OCI-LY7 (cell line): ENCODE measurements at regions of chr3 and their contacts with region 1.

Region 1: GRCh38 chr3:158109804-158110657 is at the start of gene RSRC1:
- DNase-seq: peak; percentile 91
- H3K4me3 ChIP-seq: peak within 1 kb of the TSS; percentile 90
- H3K27ac ChIP-seq: peak within 1 kb of the TSS; percentile 80
- H3K4me1 ChIP-seq: peaks cover 37% of the 10 kb centered on the region
- CTCF ChIP-seq: no peak
- total RNA-seq, gene RSRC1: 78.1 and 97.4 TPM in 2 replicates

Region 2: GRCh38 chr3:158097593-158098308 is 12.3 kb before region 1 on chr3:
- CTCF ChIA-PET with region 1: no interaction called
- POLR2A ChIA-PET with region 1: interaction called, 19 read pairs
- intact Hi-C with region 1: no loop called
- DNase-seq: peak; percentile 84
- H3K4me3 ChIP-seq: peak overlapping the region; percentile 72
- H3K27ac ChIP-seq: peak overlapping the region; percentile 2
- H3K4me1 ChIP-seq: peaks cover 12% of the 10 kb centered on the region
- CTCF ChIP-seq: no peak

Region 3: GRCh38 chr3:158121295-158121694 is 11.3 kb after region 1 on chr3:
- CTCF ChIA-PET with region 1: no interaction called
- POLR2A ChIA-PET with region 1: interaction called, 56 read pairs
- intact Hi-C with region 1: no loop called
- DNase-seq: no peak
- H3K4me3 ChIP-seq: no peak overlapping the region
- H3K27ac ChIP-seq: no peak overlapping the region
- H3K4me1 ChIP-seq: no peaks in the 10 kb centered on the region
- CTCF ChIP-seq: no peak

Region 4: DNA sequence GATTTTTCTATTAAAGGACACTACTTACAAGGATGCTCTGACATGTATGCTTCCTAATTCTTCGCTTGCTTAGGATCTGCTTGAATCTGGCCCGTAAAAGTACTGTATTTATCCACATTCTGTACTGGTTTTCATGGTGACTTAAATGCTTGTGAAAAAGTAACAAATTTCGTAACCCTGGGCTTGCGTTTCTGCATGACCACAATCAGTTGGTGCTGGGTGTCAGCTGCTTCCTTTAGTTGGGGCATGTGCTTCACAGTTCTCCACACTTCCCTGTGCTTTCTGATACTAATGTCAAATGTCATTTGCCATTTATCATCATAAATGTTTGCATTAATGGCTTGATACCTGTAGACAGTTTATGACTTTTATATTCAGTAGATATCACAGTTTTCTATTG is 242.5 kb after region 1 on chr3:
- CTCF ChIA-PET with region 1: no interaction called
- POLR2A ChIA-PET with region 1: interaction called, 8 read pairs
- intact Hi-C with region 1: loop called (anchors 2 kb)
- DNase-seq: peak; percentile 59
- H3K4me3 ChIP-seq: no peak overlapping the region
- H3K27ac ChIP-seq: peak overlapping the region; percentile 49
- H3K4me1 ChIP-seq: peaks cover 70% of the 10 kb centered on the region
- CTCF ChIP-seq: no peak

Region 5: DNA sequence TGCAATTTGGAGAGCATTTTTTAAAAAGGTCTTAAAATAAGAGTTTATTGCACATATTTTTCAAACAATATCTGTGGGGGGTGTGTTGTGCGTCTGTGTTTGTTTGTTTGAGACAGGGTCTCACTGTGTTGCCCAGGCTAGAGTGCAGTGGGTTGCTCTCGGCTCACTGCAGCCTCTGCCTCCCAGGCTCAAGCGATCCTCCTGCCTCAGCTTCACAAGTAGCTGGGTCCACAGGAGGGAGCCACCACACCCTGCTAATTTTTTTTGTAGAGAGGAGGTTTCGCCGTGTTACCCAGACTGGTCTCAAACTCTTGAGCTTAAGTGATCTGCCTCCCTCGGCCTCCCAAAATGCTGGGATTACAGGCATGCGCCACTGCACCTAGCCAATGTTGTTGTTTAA is 463.7 kb after region 1 on chr3:
- CTCF ChIA-PET with region 1: no interaction called
- POLR2A ChIA-PET with region 1: no interaction called
- intact Hi-C with region 1: no loop called
- DNase-seq: no peak
- H3K4me3 ChIP-seq: no peak overlapping the region
- H3K27ac ChIP-seq: no peak overlapping the region
- H3K4me1 ChIP-seq: no peaks in the 10 kb centered on the region
- CTCF ChIP-seq: 0 out of 2 replicates have a peak, but pooled peaks have one; percentile 14

Region 6: DNA sequence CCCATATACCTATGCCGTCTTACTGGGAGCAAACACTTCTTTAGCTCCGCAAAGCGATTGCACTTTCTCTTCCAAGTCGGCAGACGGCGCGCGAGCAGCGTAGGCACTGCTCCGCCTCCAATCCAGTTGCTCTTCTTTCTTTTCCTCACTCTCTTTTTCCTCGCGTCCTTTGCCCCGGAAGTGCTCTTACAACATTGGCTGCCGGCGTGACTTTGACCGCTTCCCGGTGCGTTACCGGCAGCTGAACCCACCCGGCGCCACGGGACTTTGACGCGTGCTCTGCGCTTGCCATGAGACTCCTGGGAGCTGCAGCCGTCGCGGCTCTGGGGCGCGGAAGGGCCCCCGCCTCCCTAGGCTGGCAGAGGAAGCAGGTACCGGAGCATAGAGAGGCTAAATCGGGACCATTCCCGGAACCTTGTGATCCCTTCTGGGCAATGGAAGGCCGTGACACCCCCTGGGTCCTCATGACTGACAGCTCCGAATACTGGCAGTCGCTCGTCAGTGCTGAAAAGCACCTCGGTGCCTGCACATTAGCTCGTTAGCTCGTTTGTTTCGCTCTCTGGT is 534.4 kb after region 1 on chr3 and contains the start of gene GFM1:
- CTCF ChIA-PET with region 1: no interaction called
- POLR2A ChIA-PET with region 1: interaction called, 5 read pairs
- intact Hi-C with region 1: loop called (anchors 5 kb)
- DNase-seq: peak; percentile 94
- H3K4me3 ChIP-seq: peak within 1 kb of the TSS; percentile 89
- H3K27ac ChIP-seq: peak within 1 kb of the TSS; percentile 43
- H3K4me1 ChIP-seq: peaks cover 13% of the 10 kb centered on the region
- CTCF ChIP-seq: peak; percentile 77
- total RNA-seq, gene GFM1: 29.4 and 36.5 TPM in 2 replicates